AG04449 (cell line): ENCODE measurements at regions of chr11 and their contacts with region 1.

Region 1: GRCh38 chr11:7098235-7098832 is 9.5 kb downstream of the RBMXL2 start:
- DNase-seq: no peak
- H3K4me3 ChIP-seq: no peak overlapping the region
- CTCF ChIP-seq: peak; percentile 42

Region 2: GRCh38 chr11:6674862-6675261 is 423.5 kb before region 1 on chr11:
- CTCF ChIA-PET with region 1: no interaction called
- POLR2A ChIA-PET with region 1: no interaction called
- DNase-seq: no peak
- H3K4me3 ChIP-seq: no peak overlapping the region
- CTCF ChIP-seq: no peak

Region 3: DNA sequence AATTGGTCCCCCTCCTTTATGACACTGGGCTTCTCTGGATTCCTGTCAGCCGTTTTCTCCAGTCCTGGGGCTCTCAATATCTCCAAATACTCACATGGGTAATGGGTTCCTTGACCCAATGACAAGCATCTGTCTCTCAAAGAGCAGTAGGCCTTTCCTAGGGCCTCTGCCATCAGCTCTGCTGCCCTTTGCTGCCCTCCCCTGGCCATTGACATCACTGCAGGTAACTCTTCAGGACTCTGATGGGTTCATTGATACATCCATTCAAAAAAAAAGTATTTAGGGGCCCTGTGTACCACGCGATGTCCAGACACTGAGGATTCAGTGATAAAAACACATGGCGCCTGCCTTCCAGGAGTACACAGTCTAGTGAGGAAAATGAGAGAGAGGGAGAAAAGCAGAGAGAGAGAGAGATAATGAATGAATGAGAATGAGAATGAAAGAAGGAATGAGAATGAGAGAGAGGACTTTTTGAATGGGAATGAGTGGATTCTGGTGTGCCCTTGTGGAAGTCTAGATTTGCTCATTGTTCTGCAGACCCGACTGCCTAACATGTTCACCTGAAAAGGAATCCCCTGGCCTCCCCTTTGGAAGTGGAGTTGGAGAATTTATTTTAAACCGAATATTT is 344.4 kb after region 1 on chr11:
- CTCF ChIA-PET with region 1: interaction called, 24 read pairs
- POLR2A ChIA-PET with region 1: no interaction called
- DNase-seq: no peak
- H3K4me3 ChIP-seq: no peak overlapping the region
- CTCF ChIP-seq: peak; percentile 85